ENCODE measurements at regions of chr22 and their contacts with region 1.

Region 1: GRCh38 chr22:42614312-42615091 is at the start of gene POLDIP3:
- DNase-seq: peak; percentile 97 to 99 (median 99)
- ATAC-seq: peak; percentile 69
- H3K4me3 ChIP-seq: peak within 1 kb of the TSS; percentile 69 to 86
- H3K4me3 Mint-ChIP-seq: peak within 1 kb of the TSS; percentile 97
- H3K27ac ChIP-seq: peak within 1 kb of the TSS; percentile 85 to 97
- H3K27ac Mint-ChIP-seq: peak within 1 kb of the TSS; percentile 100
- H3K4me1 ChIP-seq: peaks cover 50% of the 10 kb centered on the region
- H3K4me1 Mint-ChIP-seq: peaks cover 52% of the 10 kb centered on the region
- H3K27me3 ChIP-seq: no peaks in the 10 kb centered on the region
- H3K27me3 Mint-ChIP-seq: no peaks in the 10 kb centered on the region
- CTCF ChIP-seq: no peak
- total RNA-seq, gene POLDIP3: 96.4 to 103 TPM

Region 2: DNA sequence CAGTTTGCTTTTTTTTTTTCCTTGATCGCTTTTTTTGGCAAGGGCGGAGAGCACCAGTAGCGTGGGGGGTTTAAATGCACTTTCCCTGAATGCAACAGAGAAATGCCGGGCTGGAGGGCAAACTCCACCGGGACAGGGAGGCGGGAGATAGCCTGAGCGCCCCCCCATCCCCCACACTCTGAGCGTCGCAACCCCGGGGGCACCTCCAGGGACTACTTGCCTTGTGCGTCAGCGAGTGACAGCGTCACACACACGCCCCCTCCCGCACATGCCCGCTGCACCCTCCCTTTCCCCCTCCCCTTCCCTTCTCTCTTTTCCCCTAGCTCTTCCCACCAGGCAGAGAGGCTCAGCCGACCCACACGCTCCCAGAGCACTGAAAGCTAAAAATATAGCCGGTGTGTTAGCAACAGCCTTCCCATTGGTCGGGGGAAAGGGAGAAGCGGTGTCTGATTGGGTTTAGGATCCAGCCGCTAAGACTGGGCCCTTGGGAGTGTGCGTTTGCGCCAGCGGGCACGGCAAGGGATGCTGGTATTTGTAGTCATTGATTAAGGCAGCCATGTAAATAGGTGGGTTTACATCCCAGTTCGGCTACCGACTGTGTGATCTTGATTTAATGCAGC is 1166.2 kb before region 1 on chr22:
- CTCF ChIA-PET with region 1: no interaction called
- POLR2A ChIA-PET with region 1: no interaction called
- intact Hi-C with region 1: loop called in 1 of 2 experiments (anchors 10 kb)
- DNase-seq: peak; percentile 77 to 97 (median 88)
- ATAC-seq: peak; percentile 70
- H3K4me3 ChIP-seq: peak overlapping the region; percentile 79 to 96
- H3K4me3 Mint-ChIP-seq: peak overlapping the region; percentile 90
- H3K27ac ChIP-seq: peak overlapping the region; percentile 78 to 99
- H3K27ac Mint-ChIP-seq: peak overlapping the region; percentile 98
- H3K4me1 ChIP-seq: peaks cover 11% of the 10 kb centered on the region
- H3K4me1 Mint-ChIP-seq: peaks cover 23% of the 10 kb centered on the region
- H3K27me3 ChIP-seq: no peaks in the 10 kb centered on the region
- H3K27me3 Mint-ChIP-seq: no peaks in the 10 kb centered on the region
- CTCF ChIP-seq: no peak

Region 3: GRCh38 chr22:42079319-42080251 is 534.9 kb before region 1 on chr22 and contains the start of gene SMDT1:
- CTCF ChIA-PET with region 1: no interaction called
- POLR2A ChIA-PET with region 1: interaction called, 5 read pairs
- intact Hi-C with region 1: loop called in 1 of 2 experiments (anchors 10 kb)
- DNase-seq: peak; percentile 95 to 99 (median 98)
- ATAC-seq: peak; percentile 92
- H3K4me3 ChIP-seq: peak within 1 kb of the TSS; percentile 79 to 80
- H3K4me3 Mint-ChIP-seq: peak within 1 kb of the TSS; percentile 93
- H3K27ac ChIP-seq: peak within 1 kb of the TSS; percentile 89 to 97
- H3K27ac Mint-ChIP-seq: peak within 1 kb of the TSS; percentile 98
- H3K4me1 ChIP-seq: peaks cover 21% of the 10 kb centered on the region
- H3K4me1 Mint-ChIP-seq: peaks cover 36% of the 10 kb centered on the region
- H3K27me3 ChIP-seq: no peaks in the 10 kb centered on the region
- H3K27me3 Mint-ChIP-seq: no peaks in the 10 kb centered on the region
- CTCF ChIP-seq: no peak
- total RNA-seq, gene SMDT1: 30.4 to 34.5 TPM

Region 4: DNA sequence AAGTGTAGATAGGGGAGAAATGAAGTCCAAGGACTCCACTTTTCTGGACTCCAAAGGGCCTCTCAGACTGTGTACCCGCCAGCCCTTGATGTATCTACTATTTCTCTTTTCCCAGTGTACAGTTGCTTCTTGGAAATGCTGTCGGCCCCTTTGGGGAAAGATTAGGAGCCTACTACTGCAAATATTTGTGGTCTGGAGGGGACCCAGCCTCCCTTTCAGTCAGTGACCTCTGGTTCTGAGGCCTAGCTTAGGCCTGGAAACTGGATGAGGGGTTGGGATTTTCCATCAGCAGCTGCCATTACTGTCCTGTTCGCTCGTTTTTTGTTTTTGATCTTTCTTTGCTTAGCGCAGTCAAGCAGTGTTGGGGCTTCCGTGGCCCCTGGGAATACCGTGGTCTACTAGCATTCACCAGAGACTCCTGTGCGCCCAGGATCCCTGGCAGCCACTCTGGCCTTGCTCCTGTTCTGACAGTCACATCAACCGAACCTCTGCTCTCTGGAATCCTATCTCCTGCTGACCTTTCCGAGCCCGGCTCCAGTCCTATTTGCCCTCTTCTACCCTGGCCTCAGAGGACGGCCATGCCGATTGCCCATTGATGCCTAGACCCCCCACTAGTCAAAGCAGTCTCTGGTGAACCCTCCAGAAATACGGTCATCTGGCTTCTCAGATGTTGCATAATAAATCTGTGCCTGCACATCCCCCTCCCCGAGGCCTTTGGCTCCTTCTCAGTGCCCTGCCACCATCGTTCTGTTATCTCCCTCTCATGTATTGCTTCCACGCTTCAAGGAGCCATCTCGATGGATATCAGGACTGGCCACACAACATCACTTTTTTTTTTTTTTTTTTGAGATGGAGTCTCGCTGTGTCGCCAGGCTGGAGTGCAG is 93.6 kb before region 1 on chr22:
- CTCF ChIA-PET with region 1: no interaction called
- POLR2A ChIA-PET with region 1: no interaction called
- intact Hi-C with region 1: loop called in 1 of 2 experiments (anchors 1 kb)
- DNase-seq: no peak
- ATAC-seq: no peak
- H3K4me3 ChIP-seq: no peak overlapping the region
- H3K4me3 Mint-ChIP-seq: peak overlapping the region; percentile 97
- H3K27ac ChIP-seq: no peak overlapping the region
- H3K27ac Mint-ChIP-seq: no peak overlapping the region
- H3K4me1 ChIP-seq: peaks cover 16% of the 10 kb centered on the region
- H3K4me1 Mint-ChIP-seq: peaks cover 17% of the 10 kb centered on the region
- H3K27me3 ChIP-seq: no peaks in the 10 kb centered on the region
- H3K27me3 Mint-ChIP-seq: no peaks in the 10 kb centered on the region
- CTCF ChIP-seq: no peak

Region 5: DNA sequence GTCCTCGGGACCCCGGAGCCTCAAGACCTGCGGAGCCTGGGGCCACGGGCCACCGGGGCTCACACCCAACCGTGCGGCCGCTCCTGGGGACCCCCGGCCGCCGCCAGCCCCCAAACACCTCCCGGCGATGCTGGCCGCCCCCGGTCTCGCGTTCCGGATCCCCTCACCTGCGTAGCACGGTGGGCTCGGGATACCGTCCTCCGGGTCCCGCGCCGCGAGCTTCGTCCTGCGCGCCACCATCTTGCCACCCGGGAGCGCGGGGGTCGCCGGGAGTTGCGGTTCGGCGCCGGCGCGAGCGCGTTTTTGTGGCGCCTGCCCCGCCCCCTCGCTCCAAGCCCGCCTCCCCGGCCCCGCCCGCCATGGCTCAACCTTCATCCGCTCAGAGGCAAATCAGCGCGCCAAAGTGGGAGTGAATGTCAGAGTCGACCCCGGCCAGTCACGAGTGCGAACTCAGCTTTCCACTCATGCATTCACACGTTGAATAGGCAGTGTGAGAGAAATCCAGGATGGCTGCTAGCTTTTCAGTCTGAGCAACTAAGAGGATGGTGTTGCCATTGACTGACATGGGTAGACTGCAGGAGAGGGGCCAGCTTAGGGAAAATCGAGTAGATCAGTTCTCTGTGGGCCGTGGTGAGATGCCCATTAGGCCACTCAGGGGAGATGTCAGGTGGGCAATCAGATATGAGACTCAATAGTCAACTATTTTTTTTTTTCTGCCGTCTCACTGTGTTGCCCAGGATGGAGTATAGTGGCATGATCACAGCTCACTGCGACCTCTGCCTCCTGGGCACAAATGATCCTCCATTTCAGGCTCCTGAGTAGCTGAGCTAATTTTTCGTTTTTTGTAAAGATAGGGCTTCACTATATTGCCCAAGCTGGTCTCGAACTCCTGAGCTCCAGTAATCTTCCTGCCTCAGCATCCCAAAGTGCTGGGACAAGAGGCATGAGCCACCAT is 32.5 kb before region 1 on chr22:
- CTCF ChIA-PET with region 1: no interaction called
- POLR2A ChIA-PET with region 1: interaction called, 12 read pairs
- intact Hi-C with region 1: loop called (anchors 1 kb)
- DNase-seq: peak; percentile 68 to 90 (median 82)
- ATAC-seq: peak; percentile 88
- H3K4me3 ChIP-seq: peak overlapping the region; percentile 51 to 68
- H3K4me3 Mint-ChIP-seq: peak overlapping the region; percentile 96
- H3K27ac ChIP-seq: peak overlapping the region; percentile 50 to 52
- H3K27ac Mint-ChIP-seq: peak overlapping the region; percentile 87
- H3K4me1 ChIP-seq: peaks cover 11% of the 10 kb centered on the region
- H3K4me1 Mint-ChIP-seq: peaks cover 14% of the 10 kb centered on the region
- H3K27me3 ChIP-seq: no peaks in the 10 kb centered on the region
- H3K27me3 Mint-ChIP-seq: no peaks in the 10 kb centered on the region
- CTCF ChIP-seq: no peak

Region 6: GRCh38 chr22:42662114-42663021 is 47.9 kb after region 1 on chr22:
- CTCF ChIA-PET with region 1: interaction called, 3 read pairs
- POLR2A ChIA-PET with region 1: no interaction called
- intact Hi-C with region 1: loop called in 1 of 2 experiments (anchors 1 kb)
- DNase-seq: peak; percentile 60 to 88 (median 80)
- ATAC-seq: peak; percentile 90
- H3K4me3 ChIP-seq: peak overlapping the region; percentile 60 to 61
- H3K4me3 Mint-ChIP-seq: peak overlapping the region; percentile 75
- H3K27ac ChIP-seq: no peak overlapping the region
- H3K27ac Mint-ChIP-seq: no peak overlapping the region
- H3K4me1 ChIP-seq: peaks cover 6% of the 10 kb centered on the region
- H3K4me1 Mint-ChIP-seq: no peaks in the 10 kb centered on the region
- H3K27me3 ChIP-seq: no peaks in the 10 kb centered on the region
- H3K27me3 Mint-ChIP-seq: peaks cover 6% of the 10 kb centered on the region
- CTCF ChIP-seq: peak; percentile 86